Activated CD4-positive, alpha-beta T cell treated with anti-CD3 and anti-CD28 coated beads for 36 hours (primary cell): ENCODE measurements at regions of chr11 and their contacts with region 1.

Region 1: DNA sequence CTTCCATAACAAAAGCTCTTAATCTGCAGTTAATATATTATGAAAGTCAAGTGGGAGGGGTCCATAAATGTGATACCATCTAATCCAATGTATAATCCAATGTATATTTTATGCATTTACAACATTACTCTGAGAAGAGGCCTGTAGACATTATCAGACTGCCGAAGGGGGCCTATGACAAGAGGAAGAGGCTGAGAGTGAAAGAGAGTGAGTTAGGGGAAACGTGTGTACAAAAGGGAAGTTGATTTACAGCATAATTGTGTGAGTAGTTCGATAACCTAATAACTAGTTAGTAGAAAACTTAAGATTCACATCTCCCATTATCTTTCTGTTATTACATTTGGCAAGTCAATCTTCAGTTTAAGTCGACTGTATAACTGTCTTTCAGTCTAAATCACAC is 86.6 kb downstream of the DDX10 start:
- DNase-seq: no peak
- ATAC-seq: no peak
- H3K4me3 Mint-ChIP-seq: no peak overlapping the region
- H3K27ac Mint-ChIP-seq: peak overlapping the region; percentile 48
- H3K4me1 Mint-ChIP-seq: peaks cover 42% of the 10 kb centered on the region
- H3K27me3 Mint-ChIP-seq: no peaks in the 10 kb centered on the region

Region 2: GRCh38 chr11:108135845-108136544 is 615.4 kb before region 1 on chr11:
- CTCF ChIA-PET with region 1: no interaction called
- POLR2A ChIA-PET with region 1: no interaction called
- intact Hi-C with region 1: no loop called
- DNase-seq: peak; percentile 60
- ATAC-seq: peak; percentile 60
- H3K4me3 Mint-ChIP-seq: no peak overlapping the region
- H3K27ac Mint-ChIP-seq: peak overlapping the region; percentile 80
- H3K4me1 Mint-ChIP-seq: peaks cover 26% of the 10 kb centered on the region
- H3K27me3 Mint-ChIP-seq: no peaks in the 10 kb centered on the region

Region 3: GRCh38 chr11:108733479-108734116 is 17.8 kb before region 1 on chr11:
- CTCF ChIA-PET with region 1: interaction called, 11 read pairs
- POLR2A ChIA-PET with region 1: interaction called, 4 read pairs
- intact Hi-C with region 1: loop called (anchors 1 kb)
- DNase-seq: peak; percentile 65
- ATAC-seq: peak; percentile 99
- H3K4me3 Mint-ChIP-seq: no peak overlapping the region
- H3K27ac Mint-ChIP-seq: peak overlapping the region; percentile 81
- H3K4me1 Mint-ChIP-seq: peaks cover 56% of the 10 kb centered on the region
- H3K27me3 Mint-ChIP-seq: no peaks in the 10 kb centered on the region

Region 4: GRCh38 chr11:109349276-109350080 is 598.0 kb after region 1 on chr11:
- CTCF ChIA-PET with region 1: no interaction called
- POLR2A ChIA-PET with region 1: no interaction called
- intact Hi-C with region 1: no loop called
- DNase-seq: no peak
- ATAC-seq: no peak
- H3K4me3 Mint-ChIP-seq: no peak overlapping the region
- H3K27ac Mint-ChIP-seq: no peak overlapping the region
- H3K4me1 Mint-ChIP-seq: no peaks in the 10 kb centered on the region
- H3K27me3 Mint-ChIP-seq: no peaks in the 10 kb centered on the region